ENCODE measurements at regions of chr7 and their contacts with region 1.

Region 1: DNA sequence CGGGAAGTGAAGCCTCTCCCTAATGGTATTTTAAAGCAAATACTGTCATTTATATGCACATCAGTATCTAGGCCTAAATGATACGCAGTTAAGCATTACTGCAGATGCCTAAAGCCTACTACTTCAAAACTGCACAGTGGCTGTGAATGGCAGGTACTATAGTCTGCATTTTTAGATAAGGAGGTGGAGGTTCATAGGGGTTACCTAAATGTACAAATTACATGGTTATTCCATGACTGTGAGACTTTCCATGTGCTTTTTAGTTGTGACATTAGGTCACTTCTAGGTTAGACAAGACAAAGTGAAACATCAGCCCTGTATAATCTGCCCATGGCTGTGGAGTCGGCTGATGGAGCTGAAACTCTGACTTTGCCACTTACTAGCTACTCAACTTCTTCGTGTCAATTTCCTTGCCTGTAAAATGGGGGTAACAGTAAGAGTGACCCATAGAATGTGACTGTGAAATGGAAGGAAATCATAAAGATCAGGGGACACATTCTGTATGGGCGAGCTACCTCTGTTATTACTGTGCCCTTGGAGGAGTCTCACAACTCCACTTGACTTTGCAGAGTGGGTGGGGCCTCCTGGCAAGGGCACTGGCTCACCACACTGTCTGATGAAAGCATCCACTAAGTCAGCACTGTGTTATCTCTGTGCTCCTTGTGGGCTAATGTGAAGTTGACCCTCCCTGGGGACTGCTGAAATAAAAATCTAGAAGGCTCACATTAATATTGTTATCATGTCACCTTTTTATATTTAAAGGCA is 239.4 kb downstream of the TNS3 start:
- DNase-seq: no peak
- H3K4me3 ChIP-seq: no peak overlapping the region
- H3K27ac ChIP-seq: no peak overlapping the region
- H3K4me1 ChIP-seq: peaks cover 0 to 7% (median 0%) of the 10 kb centered on the region in 4 donors
- H3K27me3 ChIP-seq: no peaks in the 10 kb centered on the region
- CTCF ChIP-seq: no peak
- EP300 ChIP-seq: no peak
- POLR2A ChIP-seq: no peak

Region 2: DNA sequence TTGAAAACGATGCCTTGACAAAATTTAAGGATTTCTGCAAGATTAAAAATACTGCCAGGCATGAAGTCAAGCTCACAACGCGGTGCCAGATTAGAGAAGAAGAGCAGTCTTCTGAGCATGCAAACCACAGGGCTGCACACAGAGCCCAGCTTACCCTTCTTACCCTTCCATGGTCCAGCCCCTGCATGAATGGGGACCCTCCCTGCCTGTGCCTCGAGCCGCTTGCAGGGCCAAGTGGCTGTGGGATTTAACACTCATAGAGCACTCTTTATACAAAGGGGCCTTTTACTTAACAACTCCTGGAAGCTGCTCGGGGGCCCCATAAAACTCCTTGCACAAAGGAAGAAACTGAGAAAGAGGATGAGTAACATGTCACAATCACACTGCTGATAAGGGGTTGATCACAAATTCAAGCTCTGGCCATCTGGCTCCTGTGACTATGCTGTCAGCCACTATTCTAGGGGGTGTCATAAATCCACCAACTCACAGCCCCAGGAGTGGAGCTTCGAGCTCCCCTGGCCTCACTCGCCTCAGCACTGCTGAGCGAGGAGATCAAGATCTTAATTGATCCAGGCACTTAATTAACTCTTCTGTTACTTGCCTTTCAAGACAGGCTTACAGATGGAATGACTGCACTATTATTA is 275.4 kb before region 1 on chr7:
- intact Hi-C with region 1: no loop called
- DNase-seq: peak; percentile 64
- H3K4me3 ChIP-seq: no peak overlapping the region
- H3K27ac ChIP-seq: no peak overlapping the region
- H3K4me1 ChIP-seq: no peaks in the 10 kb centered on the region
- H3K27me3 ChIP-seq: no peaks in the 10 kb centered on the region
- CTCF ChIP-seq: no peak
- EP300 ChIP-seq: no peak
- POLR2A ChIP-seq: no peak

Region 3: GRCh38 chr7:47392231-47392759 is 49.8 kb after region 1 on chr7:
- intact Hi-C with region 1: loop called (anchors 5 kb)
- DNase-seq: no peak
- H3K4me3 ChIP-seq: no peak overlapping the region
- H3K27ac ChIP-seq: no peak overlapping the region
- H3K4me1 ChIP-seq: peaks cover 0 to 15% (median 11%) of the 10 kb centered on the region in 4 donors
- H3K27me3 ChIP-seq: no peaks in the 10 kb centered on the region
- CTCF ChIP-seq: peak; percentile 32 to 58 (median 45)
- EP300 ChIP-seq: no peak
- POLR2A ChIP-seq: no peak

Region 4: GRCh38 chr7:47763063-47763974 is 420.8 kb after region 1 on chr7:
- intact Hi-C with region 1: no loop called
- DNase-seq: no peak
- H3K4me3 ChIP-seq: no peak overlapping the region
- H3K27ac ChIP-seq: peak overlapping the region in 2 of 4 donors; percentile 48 to 56
- H3K4me1 ChIP-seq: peaks cover 0 to 31% (median 19%) of the 10 kb centered on the region in 4 donors
- H3K27me3 ChIP-seq: no peaks in the 10 kb centered on the region
- CTCF ChIP-seq: no peak
- EP300 ChIP-seq: no peak
- POLR2A ChIP-seq: no peak

Measured in esophagus muscularis mucosa (tissue), 4 donors.